Activated T-helper 2 cell treated with anti-CD3 and anti-CD28 coated beads, Interferon-gamma antibody, Interleukin-2, Interleukin-4, amounts not matched to agents 10 μg/mL and 5 μg/mL and 100 μg/mL, durations not matched to agents 14 hours and 24 hours and 36 hours (primary cell): ENCODE measurements at regions of chr1 and their contacts with region 1.

Region 1: GRCh38 chr1:92960395-92961130 is 699 bp downstream of the DIPK1A start:
- DNase-seq: peak; percentile 64
- H3K4me3 Mint-ChIP-seq: peak overlapping the region; percentile 91
- H3K27ac Mint-ChIP-seq: peak overlapping the region; percentile 96
- H3K4me1 Mint-ChIP-seq: peaks cover 37% of the 10 kb centered on the region
- H3K27me3 Mint-ChIP-seq: no peaks in the 10 kb centered on the region

Region 2: GRCh38 chr1:92310185-92310597 is 650.4 kb before region 1 on chr1:
- intact Hi-C with region 1: loop called (anchors 10 kb)
- DNase-seq: no peak
- H3K4me3 Mint-ChIP-seq: no peak overlapping the region
- H3K27ac Mint-ChIP-seq: no peak overlapping the region
- H3K4me1 Mint-ChIP-seq: peaks cover 39% of the 10 kb centered on the region
- H3K27me3 Mint-ChIP-seq: no peaks in the 10 kb centered on the region

Region 3: GRCh38 chr1:92940541-92940940 is 20.0 kb before region 1 on chr1:
- intact Hi-C with region 1: loop called (anchors 2 kb)
- DNase-seq: no peak
- H3K4me3 Mint-ChIP-seq: no peak overlapping the region
- H3K27ac Mint-ChIP-seq: no peak overlapping the region
- H3K4me1 Mint-ChIP-seq: peaks cover 58% of the 10 kb centered on the region
- H3K27me3 Mint-ChIP-seq: no peaks in the 10 kb centered on the region

Region 4: DNA sequence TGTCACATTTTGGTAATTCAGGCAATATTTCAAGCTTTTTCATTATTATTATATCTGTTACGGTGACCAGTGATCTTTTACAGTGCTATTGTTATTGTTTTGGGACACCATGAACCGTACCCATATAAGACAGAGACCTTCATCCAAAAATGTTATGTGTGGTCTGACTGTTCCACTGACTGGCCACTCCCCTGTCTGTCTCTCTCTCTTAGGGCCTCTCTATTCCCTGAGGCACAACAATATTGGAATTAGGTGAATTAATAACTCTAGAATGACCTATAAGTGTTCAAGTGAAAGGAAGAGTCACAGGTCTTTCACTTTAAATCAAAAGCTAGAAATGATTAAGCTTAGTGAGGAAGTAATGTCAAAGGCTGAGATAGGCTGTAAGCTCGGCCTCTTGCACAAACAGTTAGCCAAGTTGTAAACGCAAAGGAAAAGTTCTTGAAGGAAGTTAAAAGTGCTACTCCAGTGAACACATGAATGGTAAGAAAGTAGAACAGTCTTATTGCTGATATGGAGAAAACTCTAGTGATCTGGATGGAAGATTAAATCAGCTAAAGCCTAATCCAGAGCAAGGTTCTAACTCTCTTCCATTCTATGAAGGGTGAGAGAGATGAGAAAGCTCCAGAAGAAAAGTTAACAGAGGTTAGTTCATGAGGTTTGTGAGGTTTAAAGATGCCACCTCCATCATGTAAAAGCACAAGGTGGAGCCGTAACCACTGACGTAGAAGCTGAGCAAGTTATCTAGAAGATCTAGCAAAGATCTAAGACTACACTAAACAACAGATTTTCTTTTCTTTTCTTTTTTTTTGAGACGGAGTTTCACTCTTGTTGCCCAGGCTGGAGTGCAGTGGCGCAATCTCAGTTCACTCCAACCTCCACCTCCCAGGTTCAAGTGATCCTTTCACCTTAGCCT is 20.4 kb after region 1 on chr1:
- intact Hi-C with region 1: loop called (anchors 1 kb)
- DNase-seq: peak; percentile 45
- H3K4me3 Mint-ChIP-seq: peak overlapping the region; percentile 41
- H3K27ac Mint-ChIP-seq: peak overlapping the region; percentile 98
- H3K4me1 Mint-ChIP-seq: peaks cover 55% of the 10 kb centered on the region
- H3K27me3 Mint-ChIP-seq: no peaks in the 10 kb centered on the region

Region 5: DNA sequence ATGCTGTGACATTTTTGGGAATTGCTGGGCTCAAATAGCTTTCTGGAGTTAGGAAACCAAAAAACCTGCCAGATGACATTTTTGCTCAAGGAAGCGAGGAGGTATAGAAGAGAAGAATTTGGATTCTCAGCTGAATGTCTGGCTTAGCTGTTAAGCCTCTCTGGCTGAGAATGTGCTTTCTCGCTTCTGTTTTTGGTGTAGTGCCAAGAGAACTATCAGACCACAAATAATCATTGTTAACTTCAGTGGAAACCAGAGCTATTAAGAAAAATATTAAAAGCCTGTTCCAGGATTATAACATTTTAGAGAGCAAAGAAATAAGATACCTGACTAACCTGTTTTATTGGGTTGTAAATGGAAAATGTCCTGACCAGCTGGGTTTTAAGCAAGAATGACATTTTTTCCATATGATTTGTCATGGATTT is 40.2 kb after region 1 on chr1:
- intact Hi-C with region 1: no loop called
- DNase-seq: no peak
- H3K4me3 Mint-ChIP-seq: no peak overlapping the region
- H3K27ac Mint-ChIP-seq: no peak overlapping the region
- H3K4me1 Mint-ChIP-seq: peaks cover 3% of the 10 kb centered on the region
- H3K27me3 Mint-ChIP-seq: peaks cover 20% of the 10 kb centered on the region

Region 6: DNA sequence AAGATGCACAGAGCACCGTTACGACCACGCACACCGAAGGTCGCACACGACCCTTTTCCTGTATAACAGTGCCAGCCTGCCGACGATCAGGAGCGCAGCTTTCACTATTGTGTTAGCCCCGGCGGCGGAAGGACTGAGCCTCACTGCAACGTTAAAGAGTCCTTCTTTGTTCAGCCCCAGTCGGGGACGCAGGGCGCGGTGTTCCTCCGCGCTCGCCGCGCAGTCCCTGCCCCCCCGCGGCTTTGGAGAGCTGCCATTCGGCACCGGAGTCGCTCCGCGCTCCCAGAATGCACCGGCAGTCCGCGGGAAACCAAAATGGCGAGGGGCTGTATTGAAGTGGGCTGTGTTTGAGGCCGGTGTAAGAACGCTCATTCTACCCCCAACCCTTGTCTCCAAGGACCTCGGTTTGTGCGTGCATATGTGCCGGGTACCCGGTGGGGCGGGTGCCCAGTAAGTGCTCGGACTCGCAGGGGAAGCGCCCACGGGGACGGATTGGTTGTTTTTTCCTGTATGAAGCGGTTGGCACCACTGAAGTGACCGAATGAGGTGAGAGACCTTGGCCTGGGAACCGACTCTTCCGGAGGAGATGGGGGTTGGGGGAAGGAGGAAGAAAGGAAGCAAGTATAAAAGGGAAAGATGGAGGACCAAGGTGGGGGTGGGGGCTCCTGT is 118.6 kb after region 1 on chr1 and contains the start of gene MTF2:
- intact Hi-C with region 1: loop called (anchors 1 kb)
- DNase-seq: peak; percentile 93
- H3K4me3 Mint-ChIP-seq: peak within 1 kb of the TSS; percentile 93
- H3K27ac Mint-ChIP-seq: peak within 1 kb of the TSS; percentile 89
- H3K4me1 Mint-ChIP-seq: peaks cover 25% of the 10 kb centered on the region
- H3K27me3 Mint-ChIP-seq: no peaks in the 10 kb centered on the region
- total RNA-seq, gene MTF2: 73.1 and 83.5 TPM in 2 replicates

Region 7: GRCh38 chr1:93345633-93346420 is 385.3 kb after region 1 on chr1 and contains the start of gene DR1:
- intact Hi-C with region 1: loop called (anchors 10 kb)
- DNase-seq: peak; percentile 88
- H3K4me3 Mint-ChIP-seq: peak within 1 kb of the TSS; percentile 88
- H3K27ac Mint-ChIP-seq: peak within 1 kb of the TSS; percentile 98
- H3K4me1 Mint-ChIP-seq: peaks cover 24% of the 10 kb centered on the region
- H3K27me3 Mint-ChIP-seq: no peaks in the 10 kb centered on the region
- total RNA-seq, gene DR1: 103 and 104 TPM in 2 replicates